Caco-2 (cell line): ENCODE measurements at regions of chr3 and their contacts with region 1.

Region 1: DNA sequence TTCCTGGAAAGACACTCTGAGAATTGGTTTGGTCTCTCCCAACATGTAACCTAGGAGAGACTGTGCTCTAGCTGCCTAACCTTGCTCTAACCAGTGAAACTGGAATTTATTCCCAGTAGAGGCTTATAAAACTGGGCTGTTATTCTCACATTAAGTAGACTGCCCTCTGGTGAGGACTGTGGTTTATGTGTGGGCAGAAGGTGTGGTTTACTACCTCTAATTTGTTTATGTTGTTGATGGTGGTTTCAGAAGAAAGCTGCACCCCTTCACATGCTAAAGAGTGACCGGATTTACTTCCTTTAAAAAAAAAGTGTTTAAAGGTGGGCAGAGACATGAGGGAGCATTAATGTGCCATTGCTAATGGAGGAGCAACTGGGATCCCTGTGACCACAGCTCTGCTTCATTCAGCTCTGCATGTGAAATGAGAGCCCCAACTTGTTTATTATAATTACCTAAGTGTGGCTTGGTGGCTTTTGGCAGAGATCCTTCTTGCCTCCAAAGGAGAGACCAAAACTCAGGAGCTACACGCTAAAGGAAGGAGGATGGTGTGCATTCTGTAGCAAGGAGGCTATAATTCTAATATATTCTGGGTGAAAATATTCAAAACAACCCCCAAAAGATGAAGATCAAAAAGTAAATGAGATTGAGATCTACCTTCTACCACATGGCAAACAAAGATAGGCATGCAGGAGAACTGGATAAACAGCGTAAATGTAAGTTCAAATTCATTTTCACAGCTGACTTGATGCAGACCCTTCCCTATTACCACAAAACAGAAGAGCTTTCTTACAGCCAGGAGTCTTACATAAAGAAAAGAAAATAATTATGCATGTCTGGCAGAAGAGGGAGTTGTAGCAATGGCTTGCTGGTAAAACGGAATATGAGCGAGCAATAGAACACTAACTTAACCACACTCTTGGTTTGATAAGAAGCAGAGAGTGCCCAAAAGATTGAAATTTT is 273.0 kb downstream of the MECOM start:
- DNase-seq: peak in 1 of 2 experiments; percentile 16
- H3K4me3 ChIP-seq: no peak overlapping the region
- H3K4me3 Mint-ChIP-seq: no peak overlapping the region
- H3K27ac Mint-ChIP-seq: peak overlapping the region; percentile 58
- H3K4me1 ChIP-seq: peaks cover 39% of the 10 kb centered on the region
- H3K4me1 Mint-ChIP-seq: peaks cover 33% of the 10 kb centered on the region
- H3K27me3 ChIP-seq: no peaks in the 10 kb centered on the region
- H3K27me3 Mint-ChIP-seq: no peaks in the 10 kb centered on the region
- CTCF ChIP-seq: peak in 1 of 2 experiments; percentile 26

Region 2: DNA sequence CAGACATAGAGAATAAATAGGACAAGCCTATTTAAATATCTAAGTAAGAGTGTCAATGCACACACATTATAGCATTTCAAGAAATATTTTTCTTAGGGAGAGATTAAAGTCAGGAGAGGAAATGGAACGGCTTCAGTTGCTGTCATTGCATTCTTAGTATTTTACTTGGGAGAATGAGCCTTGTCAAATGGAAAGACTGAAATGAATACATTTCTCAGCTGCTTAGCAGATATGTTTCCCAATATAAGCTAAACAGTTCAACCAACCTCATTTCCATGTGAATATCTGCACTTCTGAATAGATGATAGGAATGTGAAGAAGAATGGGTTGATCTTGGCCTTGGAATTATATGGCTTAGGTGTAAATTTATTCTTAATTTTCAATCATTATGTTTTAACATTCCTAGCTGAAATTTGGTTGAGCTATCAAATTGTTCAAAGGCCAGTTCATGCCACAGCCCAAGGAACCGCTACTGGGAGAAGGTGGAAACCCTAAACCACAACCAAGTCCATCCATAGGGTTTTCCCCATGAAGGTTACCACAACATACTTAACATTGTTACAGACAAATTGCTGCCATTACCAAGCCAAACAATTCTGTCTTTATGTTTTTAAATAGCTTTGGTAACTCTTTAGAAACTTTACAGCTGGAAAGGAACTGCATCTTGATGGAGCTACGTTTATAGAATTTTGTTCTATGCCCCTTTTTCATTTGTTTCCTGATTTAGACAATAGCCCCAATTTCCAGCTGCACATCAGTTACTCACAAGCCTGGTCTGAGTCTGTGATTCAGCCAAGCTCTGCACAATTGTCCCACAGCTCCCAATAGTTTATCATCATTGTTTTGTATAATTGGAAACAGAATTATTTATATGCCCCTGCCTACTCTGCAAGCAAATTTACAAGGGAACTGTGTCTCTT is 186.7 kb before region 1 on chr3:
- CTCF ChIA-PET with region 1: no interaction called
- POLR2A ChIA-PET with region 1: no interaction called
- intact Hi-C with region 1: no loop called
- DNase-seq: no peak
- H3K4me3 ChIP-seq: no peak overlapping the region
- H3K4me3 Mint-ChIP-seq: no peak overlapping the region
- H3K27ac Mint-ChIP-seq: no peak overlapping the region
- H3K4me1 ChIP-seq: no peaks in the 10 kb centered on the region
- H3K4me1 Mint-ChIP-seq: no peaks in the 10 kb centered on the region
- H3K27me3 ChIP-seq: no peaks in the 10 kb centered on the region
- H3K27me3 Mint-ChIP-seq: no peaks in the 10 kb centered on the region
- CTCF ChIP-seq: no peak

Region 3: GRCh38 chr3:169218314-169218983 is 172.1 kb before region 1 on chr3:
- CTCF ChIA-PET with region 1: no interaction called
- POLR2A ChIA-PET with region 1: no interaction called
- intact Hi-C with region 1: loop called (anchors 1 kb)
- DNase-seq: peak; percentile 67
- H3K4me3 ChIP-seq: no peak overlapping the region
- H3K4me3 Mint-ChIP-seq: no peak overlapping the region
- H3K27ac Mint-ChIP-seq: no peak overlapping the region
- H3K4me1 ChIP-seq: no peaks in the 10 kb centered on the region
- H3K4me1 Mint-ChIP-seq: no peaks in the 10 kb centered on the region
- H3K27me3 ChIP-seq: no peaks in the 10 kb centered on the region
- H3K27me3 Mint-ChIP-seq: no peaks in the 10 kb centered on the region
- CTCF ChIP-seq: peak; percentile 51 to 79

Region 4: DNA sequence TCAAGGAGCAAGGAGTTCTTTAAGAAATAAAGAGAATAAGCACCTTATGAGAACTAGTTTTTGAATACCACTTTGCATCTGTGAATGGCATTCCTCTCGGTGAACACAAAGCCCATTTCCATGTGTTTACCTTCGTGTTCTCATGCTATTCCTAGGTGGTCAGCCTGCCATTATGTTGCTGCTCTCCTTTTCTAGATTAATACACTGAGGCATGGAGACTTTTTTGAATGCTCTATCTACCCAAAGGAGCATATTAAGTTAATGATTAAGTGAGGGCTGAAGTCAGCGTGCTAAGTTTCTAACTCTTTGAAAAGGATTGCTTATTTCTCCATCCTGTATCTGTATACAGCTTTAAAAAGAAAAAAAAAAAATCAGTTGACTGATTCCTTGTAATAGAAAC is 121.5 kb before region 1 on chr3:
- CTCF ChIA-PET with region 1: no interaction called
- POLR2A ChIA-PET with region 1: no interaction called
- intact Hi-C with region 1: loop called (anchors 1 kb)
- DNase-seq: peak in 1 of 2 experiments; percentile 4
- H3K4me3 ChIP-seq: peak overlapping the region; percentile 17; the same call in 1 of the 2 replicates
- H3K4me3 Mint-ChIP-seq: peak overlapping the region; percentile 66
- H3K27ac Mint-ChIP-seq: peak overlapping the region; percentile 77
- H3K4me1 ChIP-seq: peaks cover 31% of the 10 kb centered on the region
- H3K4me1 Mint-ChIP-seq: peaks cover 22% of the 10 kb centered on the region
- H3K27me3 ChIP-seq: no peaks in the 10 kb centered on the region
- H3K27me3 Mint-ChIP-seq: no peaks in the 10 kb centered on the region
- CTCF ChIP-seq: no peak

Region 5: DNA sequence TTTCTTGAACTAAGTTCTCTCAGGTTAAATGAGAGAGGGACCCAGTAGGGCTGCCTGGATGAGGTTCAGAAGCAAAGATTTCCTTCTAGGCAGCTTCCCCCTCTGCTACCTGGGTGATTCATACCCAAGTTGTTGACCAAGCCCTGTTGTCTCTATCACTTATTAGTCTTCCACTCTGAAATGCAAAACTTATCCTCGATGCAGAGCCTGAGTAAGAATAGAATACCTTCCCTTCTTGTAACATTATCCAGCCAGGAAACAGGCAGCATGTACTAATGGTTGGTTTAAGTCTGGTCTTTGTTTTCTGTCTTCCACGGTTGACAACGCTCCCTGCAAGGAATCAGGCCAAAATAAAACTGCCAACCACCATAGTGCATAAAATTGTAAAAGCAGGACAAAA is 104.3 kb before region 1 on chr3:
- CTCF ChIA-PET with region 1: no interaction called
- POLR2A ChIA-PET with region 1: no interaction called
- intact Hi-C with region 1: loop called (anchors 5 kb)
- DNase-seq: no peak
- H3K4me3 ChIP-seq: no peak overlapping the region
- H3K4me3 Mint-ChIP-seq: no peak overlapping the region
- H3K27ac Mint-ChIP-seq: no peak overlapping the region
- H3K4me1 ChIP-seq: peaks cover 24% of the 10 kb centered on the region
- H3K4me1 Mint-ChIP-seq: peaks cover 26% of the 10 kb centered on the region
- H3K27me3 ChIP-seq: no peaks in the 10 kb centered on the region
- H3K27me3 Mint-ChIP-seq: no peaks in the 10 kb centered on the region
- CTCF ChIP-seq: no peak

Region 6: DNA sequence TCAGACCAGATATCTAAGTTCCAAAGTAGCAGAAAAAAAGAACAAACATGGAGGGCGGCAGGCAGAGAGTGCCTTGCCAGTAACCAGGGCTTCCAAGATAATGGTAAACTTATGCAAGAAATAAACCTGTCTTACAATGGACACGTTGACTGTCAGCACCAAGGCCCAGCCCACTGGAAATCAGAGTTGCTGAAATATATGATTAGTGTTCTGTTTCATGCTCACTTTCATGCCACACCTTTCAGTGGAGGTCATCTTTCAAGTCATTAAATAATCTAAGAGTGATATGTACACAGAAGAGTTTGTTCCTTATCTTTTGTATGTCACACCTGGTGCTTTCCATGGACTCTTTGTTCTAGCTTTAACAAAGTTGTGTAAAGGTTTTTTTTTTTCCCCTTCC is 85.1 kb before region 1 on chr3:
- CTCF ChIA-PET with region 1: no interaction called
- POLR2A ChIA-PET with region 1: no interaction called
- intact Hi-C with region 1: loop called (anchors 1 kb)
- DNase-seq: peak; percentile 76 to 85
- H3K4me3 ChIP-seq: no peak overlapping the region
- H3K4me3 Mint-ChIP-seq: peak overlapping the region; percentile 20
- H3K27ac Mint-ChIP-seq: peak overlapping the region; percentile 44
- H3K4me1 ChIP-seq: peaks cover 27% of the 10 kb centered on the region
- H3K4me1 Mint-ChIP-seq: peaks cover 13% of the 10 kb centered on the region
- H3K27me3 ChIP-seq: no peaks in the 10 kb centered on the region
- H3K27me3 Mint-ChIP-seq: no peaks in the 10 kb centered on the region
- CTCF ChIP-seq: no peak

Region 7: DNA sequence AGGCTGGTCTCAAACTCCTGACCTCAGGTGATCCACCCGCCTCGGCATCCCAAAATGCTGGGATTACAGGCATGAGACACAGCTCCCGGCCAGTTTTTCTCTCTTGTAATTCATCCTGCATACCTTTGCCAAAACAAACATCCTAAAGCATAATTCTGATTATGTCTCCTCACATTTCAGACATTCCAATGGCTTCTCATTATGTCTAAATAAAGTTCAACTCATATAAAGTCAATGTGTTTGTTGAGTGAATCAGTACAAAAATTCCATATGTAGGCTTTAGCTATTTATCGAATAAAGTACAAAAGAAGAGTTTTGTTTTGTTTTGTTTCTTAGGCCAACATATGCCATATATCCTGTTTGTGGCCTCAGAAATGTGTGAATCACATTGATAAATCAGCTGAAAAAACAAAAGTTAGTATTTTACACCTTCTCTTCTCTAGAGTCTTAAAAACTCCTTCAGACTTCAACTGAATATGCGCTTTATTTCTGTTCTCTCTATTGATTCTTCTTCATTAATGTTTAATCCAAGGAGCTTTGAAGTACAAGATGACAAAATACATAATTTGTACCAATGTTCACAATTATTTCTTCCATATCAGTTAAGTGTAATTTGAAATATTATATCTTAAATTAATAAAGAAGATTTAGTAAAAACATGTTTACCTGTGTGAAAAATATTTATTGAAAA is 107.2 kb after region 1 on chr3:
- CTCF ChIA-PET with region 1: no interaction called
- POLR2A ChIA-PET with region 1: no interaction called
- intact Hi-C with region 1: loop called (anchors 5 kb)
- DNase-seq: no peak
- H3K4me3 ChIP-seq: no peak overlapping the region
- H3K4me3 Mint-ChIP-seq: no peak overlapping the region
- H3K27ac Mint-ChIP-seq: no peak overlapping the region
- H3K4me1 ChIP-seq: peaks cover 4% of the 10 kb centered on the region; the same call in 1 of the 2 replicates
- H3K4me1 Mint-ChIP-seq: no peaks in the 10 kb centered on the region
- H3K27me3 ChIP-seq: no peaks in the 10 kb centered on the region
- H3K27me3 Mint-ChIP-seq: no peaks in the 10 kb centered on the region
- CTCF ChIP-seq: no peak

Region 8: GRCh38 chr3:169662132-169662842 is 271.7 kb after region 1 on chr3:
- CTCF ChIA-PET with region 1: no interaction called
- POLR2A ChIA-PET with region 1: no interaction called
- intact Hi-C with region 1: loop called (anchors 2 kb)
- DNase-seq: peak; percentile 83 to 92
- H3K4me3 ChIP-seq: peak overlapping the region; percentile 54
- H3K4me3 Mint-ChIP-seq: peak overlapping the region; percentile 87
- H3K27ac Mint-ChIP-seq: no peak overlapping the region
- H3K4me1 ChIP-seq: peaks cover 3% of the 10 kb centered on the region; the same call in 1 of the 2 replicates
- H3K4me1 Mint-ChIP-seq: no peaks in the 10 kb centered on the region
- H3K27me3 ChIP-seq: peaks cover 3% of the 10 kb centered on the region
- H3K27me3 Mint-ChIP-seq: peaks cover 11% of the 10 kb centered on the region
- CTCF ChIP-seq: peak; percentile 73 to 77